ENCODE measurements at regions of chr18 and their contacts with region 1.

Region 1: DNA sequence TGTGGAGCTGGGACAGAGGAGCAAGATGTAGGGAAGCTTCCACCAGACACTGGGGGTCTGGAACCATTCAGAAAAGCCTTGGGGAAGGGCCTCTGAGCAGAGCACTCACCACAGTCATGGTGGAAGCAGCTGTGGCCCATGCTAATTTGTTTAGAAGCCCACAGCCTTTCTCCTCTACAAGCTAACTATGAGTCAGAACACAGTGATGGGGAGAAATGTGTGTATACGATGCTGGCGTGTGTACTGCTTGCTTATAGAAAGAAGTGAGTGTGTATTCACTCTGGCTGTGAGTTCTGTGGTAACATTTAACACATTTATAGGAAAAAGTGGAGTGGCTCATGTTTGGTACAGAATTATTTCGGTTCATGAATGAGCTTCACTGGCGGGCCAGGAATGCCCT is 157.0 kb upstream of the ACAA2 start:
- DNase-seq: no peak
- ATAC-seq: no peak
- H3K4me3 ChIP-seq: no peak overlapping the region
- H3K27ac ChIP-seq: no peak overlapping the region
- H3K4me1 ChIP-seq: no peaks in the 10 kb centered on the region
- H3K27me3 ChIP-seq: no peaks in the 10 kb centered on the region
- CTCF ChIP-seq: no peak

Region 2: GRCh38 chr18:49911427-49911826 is 58.9 kb before region 1 on chr18:
- intact Hi-C with region 1: loop called in 1 of 10 experiments (anchors 10 kb)
- DNase-seq: no peak
- ATAC-seq: no peak
- H3K4me3 ChIP-seq: no peak overlapping the region
- H3K27ac ChIP-seq: no peak overlapping the region
- H3K4me1 ChIP-seq: no peaks in the 10 kb centered on the region
- H3K27me3 ChIP-seq: peaks cover 0 to 13% (median 0%) of the 10 kb centered on the region in 7 donors
- CTCF ChIP-seq: no peak

Region 3: DNA sequence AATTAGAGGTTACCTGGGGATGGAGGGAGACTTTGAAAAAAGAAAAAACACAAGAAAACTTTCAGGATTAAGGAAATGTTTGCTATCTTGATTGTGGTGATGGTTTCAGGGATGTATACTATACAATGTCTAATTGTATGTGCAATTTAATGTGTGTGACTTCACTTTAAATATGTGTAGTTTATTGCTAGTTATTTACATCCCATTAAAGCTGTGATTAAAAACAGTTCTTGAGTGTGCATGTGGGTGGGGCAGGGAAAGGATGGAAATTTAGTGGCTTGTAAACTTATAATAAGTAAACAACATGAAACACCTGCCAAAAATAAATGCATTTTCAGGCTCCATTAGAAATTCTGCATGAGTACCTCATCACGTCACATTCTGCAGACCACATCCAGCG is 57.7 kb after region 1 on chr18:
- intact Hi-C with region 1: loop called in 1 of 10 experiments (anchors 10 kb)
- DNase-seq: no peak
- ATAC-seq: no peak
- H3K4me3 ChIP-seq: no peak overlapping the region
- H3K27ac ChIP-seq: no peak overlapping the region
- H3K4me1 ChIP-seq: no peaks in the 10 kb centered on the region
- H3K27me3 ChIP-seq: peaks cover 0 to 9% (median 2%) of the 10 kb centered on the region in 7 donors
- CTCF ChIP-seq: no peak

Region 4: GRCh38 chr18:50548160-50548559 is 577.8 kb after region 1 on chr18:
- intact Hi-C with region 1: no loop called
- DNase-seq: no peak
- ATAC-seq: no peak
- H3K4me3 ChIP-seq: no peak overlapping the region
- H3K27ac ChIP-seq: no peak overlapping the region
- H3K4me1 ChIP-seq: no peaks in the 10 kb centered on the region
- H3K27me3 ChIP-seq: peaks cover 0 to 7% (median 0%) of the 10 kb centered on the region in 7 donors
- CTCF ChIP-seq: no peak

Measured in heart right ventricle (tissue), 16 donors.